Heart left ventricle (tissue), 16 donors: ENCODE measurements at regions of chr5 and their contacts with region 1.

Region 1: DNA sequence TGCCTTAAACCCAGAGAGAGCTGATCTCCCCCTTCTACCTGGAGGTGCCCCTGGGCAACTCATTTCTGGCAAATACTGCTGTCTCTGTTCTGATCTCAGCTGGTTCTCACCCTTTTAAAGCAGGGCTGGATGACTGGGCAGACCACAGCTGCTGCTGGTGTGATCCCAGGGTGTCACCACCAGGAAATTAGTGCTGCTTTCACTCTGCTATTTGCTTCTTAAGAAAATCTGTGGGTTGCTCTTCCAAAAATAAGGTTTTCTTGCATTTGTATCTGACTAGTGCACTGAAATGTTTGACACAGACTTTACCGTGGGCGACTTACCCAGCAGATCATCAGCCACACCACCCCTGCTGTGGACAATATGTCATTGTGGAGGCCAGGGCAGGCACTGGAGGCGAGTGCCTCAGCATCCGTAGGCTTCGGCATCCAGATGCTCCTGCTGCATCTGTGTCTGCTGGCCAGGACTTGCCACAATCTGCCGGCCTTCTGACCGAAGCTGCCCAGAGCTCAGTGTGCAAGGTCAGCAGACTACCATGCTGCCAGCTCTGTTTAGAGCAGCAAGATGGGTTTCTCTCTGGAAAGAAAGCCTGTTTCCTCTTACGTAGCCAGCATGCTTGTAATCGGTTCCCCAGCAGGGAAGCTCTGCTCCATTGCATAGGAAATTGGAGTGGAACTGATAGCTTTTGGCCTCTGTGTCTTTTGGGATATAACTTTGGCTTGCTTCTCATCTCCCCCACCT is 13.6 kb downstream of the ARHGAP26 start:
- DNase-seq: peak; percentile 41 to 76 (median 54)
- ATAC-seq: peak; percentile 9 to 71 (median 54)
- H3K4me3 ChIP-seq: peak overlapping the region in 7 of 12 donors; percentile 0 to 33 (median 14)
- H3K27ac ChIP-seq: peak overlapping the region; percentile 29 to 87 (median 76)
- H3K4me1 ChIP-seq: peaks cover 0 to 88% (median 63%) of the 10 kb centered on the region in 12 donors
- H3K27me3 ChIP-seq: no peaks in the 10 kb centered on the region
- CTCF ChIP-seq: peak in 1 of 12 donors; percentile 14
- POLR2A ChIP-seq: no peak

Region 2: GRCh38 chr5:142743592-142744441 is 40.0 kb before region 1 on chr5:
- intact Hi-C with region 1: no loop called
- DNase-seq: peak in 2 of 5 donors; percentile 48 to 58
- ATAC-seq: peak; percentile 30 to 81 (median 48)
- H3K4me3 ChIP-seq: no peak overlapping the region
- H3K27ac ChIP-seq: peak overlapping the region; percentile 65 to 92 (median 78)
- H3K4me1 ChIP-seq: peaks cover 5 to 59% (median 45%) of the 10 kb centered on the region in 12 donors
- H3K27me3 ChIP-seq: no peaks in the 10 kb centered on the region
- CTCF ChIP-seq: peak in 1 of 12 donors; percentile 3
- POLR2A ChIP-seq: no peak

Region 3: DNA sequence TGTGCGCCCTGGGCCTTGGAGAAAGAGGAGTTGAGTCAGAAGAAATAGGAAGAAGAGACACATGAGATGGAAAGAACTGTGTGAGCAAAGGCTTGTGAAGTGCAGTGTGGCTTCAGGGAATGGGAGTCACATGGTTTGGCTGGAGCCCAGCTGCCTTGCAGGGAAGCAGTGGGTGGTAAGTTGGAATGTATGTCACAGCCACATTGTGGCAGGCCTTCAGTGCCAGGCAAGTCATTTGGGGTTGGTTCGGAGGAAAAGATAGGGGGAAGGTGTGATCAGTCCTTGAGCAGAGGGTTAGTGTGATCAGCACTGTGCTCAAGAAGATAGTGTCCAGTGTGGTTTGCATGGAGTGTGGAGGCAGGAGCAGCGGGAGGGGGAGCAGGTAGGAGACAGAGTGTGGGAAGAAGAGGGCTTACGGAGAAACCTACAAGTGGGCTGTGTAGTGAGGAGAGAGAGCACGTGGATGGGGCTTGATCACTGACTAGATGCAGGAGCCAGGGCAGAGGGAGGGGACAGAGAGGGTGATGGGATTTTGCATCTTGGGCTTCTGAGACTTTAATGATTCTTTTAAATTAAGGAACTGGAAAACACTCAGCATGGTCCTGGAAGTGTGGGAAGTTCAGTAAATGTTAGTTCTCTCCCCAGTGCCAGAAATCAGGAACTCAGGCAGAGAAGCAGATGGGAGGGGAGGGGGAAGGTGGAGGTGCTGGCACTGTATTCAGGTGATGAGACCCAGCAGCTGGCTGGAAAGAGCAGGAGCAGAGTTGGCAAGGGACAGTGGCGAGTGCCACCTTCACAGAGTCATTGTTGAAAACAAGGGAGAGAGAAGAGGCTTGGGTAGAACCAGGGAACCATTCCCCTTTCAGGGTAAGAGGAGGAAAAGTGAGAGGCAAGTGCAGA is 33.0 kb after region 1 on chr5:
- intact Hi-C with region 1: loop called in 3 of 10 experiments (anchors 5 kb)
- DNase-seq: peak in 3 of 5 donors; percentile 68 to 75 (median 75)
- ATAC-seq: peak in 3 of 4 donors; percentile 32 to 55 (median 36)
- H3K4me3 ChIP-seq: no peak overlapping the region
- H3K27ac ChIP-seq: peak overlapping the region in 11 of 12 donors; percentile 7 to 91 (median 50)
- H3K4me1 ChIP-seq: peaks cover 12 to 90% (median 68%) of the 10 kb centered on the region in 12 donors
- H3K27me3 ChIP-seq: no peaks in the 10 kb centered on the region
- CTCF ChIP-seq: no peak
- POLR2A ChIP-seq: no peak

Region 4: DNA sequence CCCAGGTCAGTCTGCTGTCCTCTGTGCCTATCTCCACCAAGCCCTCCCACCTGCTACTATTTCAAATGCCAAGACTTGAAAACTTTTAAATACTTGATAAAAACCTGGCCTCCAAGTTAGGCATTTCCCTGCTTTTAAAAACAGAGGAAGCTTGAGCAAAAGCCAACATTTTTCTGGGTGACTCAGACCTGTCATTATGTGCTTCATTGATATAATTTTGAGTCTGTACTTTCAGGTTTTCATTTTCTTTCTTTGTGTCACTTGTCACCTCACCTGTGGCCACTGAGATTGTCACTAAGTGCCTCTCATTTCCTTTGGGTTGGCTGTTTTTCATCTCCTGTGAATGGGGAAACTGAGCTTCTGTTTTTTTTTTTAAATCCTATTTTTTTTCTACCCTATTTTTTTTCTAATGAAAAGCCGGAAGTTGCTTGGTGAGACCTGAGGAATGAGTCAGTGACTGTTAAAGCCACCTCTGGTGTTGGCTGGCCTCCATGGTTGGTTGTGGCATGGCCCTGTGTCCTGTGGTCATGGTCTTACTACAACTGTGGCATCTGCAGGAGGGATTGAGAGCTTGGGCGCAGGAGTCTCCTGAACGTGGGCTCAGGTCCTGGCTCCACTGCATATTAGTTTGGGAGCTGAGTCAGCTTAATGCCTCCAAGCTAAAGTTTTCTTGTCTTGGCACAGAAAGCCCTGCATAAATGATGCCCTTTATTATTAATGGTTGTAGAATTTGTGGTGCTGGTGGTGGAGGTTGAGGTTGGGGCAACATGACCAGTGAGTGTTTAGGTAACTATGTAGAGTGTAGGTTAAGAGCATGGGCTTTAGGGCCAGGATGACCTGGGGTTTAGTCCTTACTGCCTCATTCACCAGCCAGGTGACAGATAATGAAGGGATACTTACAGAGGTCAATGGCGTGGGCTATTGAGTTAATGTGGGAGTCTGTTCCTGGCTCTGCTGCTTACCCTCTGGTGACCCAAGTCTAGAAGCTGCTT is 43.3 kb after region 1 on chr5:
- intact Hi-C with region 1: loop called in 1 of 10 experiments (anchors 5 kb)
- DNase-seq: no peak
- ATAC-seq: peak in 1 of 4 donors; percentile 26
- H3K4me3 ChIP-seq: no peak overlapping the region
- H3K27ac ChIP-seq: peak overlapping the region in 11 of 12 donors; percentile 22 to 75 (median 55)
- H3K4me1 ChIP-seq: peaks cover 0 to 96% (median 76%) of the 10 kb centered on the region in 12 donors
- H3K27me3 ChIP-seq: no peaks in the 10 kb centered on the region
- CTCF ChIP-seq: no peak
- POLR2A ChIP-seq: no peak